ENCODE measurements at regions of chr12 and their contacts with region 1.

Region 1: GRCh38 chr12:9707864-9708808 is 24.8 kb downstream of the CLECL1 start:
- DNase-seq: peak; percentile 77
- H3K4me3 Mint-ChIP-seq: peak overlapping the region; percentile 17
- H3K27ac Mint-ChIP-seq: peak overlapping the region; percentile 87
- H3K4me1 Mint-ChIP-seq: peaks cover 48% of the 10 kb centered on the region
- H3K27me3 Mint-ChIP-seq: no peaks in the 10 kb centered on the region

Region 2: GRCh38 chr12:9634177-9634803 is 73.8 kb before region 1 on chr12:
- CTCF ChIA-PET with region 1: interaction called, 14 read pairs
- POLR2A ChIA-PET with region 1: no interaction called
- DNase-seq: peak; percentile 88
- H3K4me3 Mint-ChIP-seq: no peak overlapping the region
- H3K27ac Mint-ChIP-seq: peak overlapping the region; percentile 80
- H3K4me1 Mint-ChIP-seq: peaks cover 58% of the 10 kb centered on the region
- H3K27me3 Mint-ChIP-seq: no peaks in the 10 kb centered on the region

Region 3: DNA sequence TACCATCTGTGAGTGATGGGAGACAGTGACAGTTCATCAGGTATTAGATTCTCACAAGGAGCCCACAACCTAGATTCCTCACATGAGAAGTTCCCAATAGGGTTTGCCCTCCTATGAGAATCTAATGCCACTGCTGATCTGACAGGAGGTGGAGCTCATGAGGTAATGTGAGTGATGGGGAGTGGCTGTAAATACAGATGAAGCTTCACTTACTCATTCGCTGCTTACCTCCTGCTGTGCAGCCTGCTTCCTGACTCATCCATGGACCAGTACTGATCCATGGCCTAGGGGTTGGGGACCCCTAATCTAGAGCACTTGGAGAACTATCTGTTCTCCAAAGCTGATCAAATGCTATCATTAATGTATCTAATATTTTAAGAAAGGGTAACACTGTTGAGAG is 20.9 kb before region 1 on chr12:
- CTCF ChIA-PET with region 1: interaction called, 15 read pairs
- POLR2A ChIA-PET with region 1: no interaction called
- DNase-seq: no peak
- H3K4me3 Mint-ChIP-seq: no peak overlapping the region
- H3K27ac Mint-ChIP-seq: peak overlapping the region; percentile 71
- H3K4me1 Mint-ChIP-seq: peaks cover 76% of the 10 kb centered on the region
- H3K27me3 Mint-ChIP-seq: no peaks in the 10 kb centered on the region

Region 4: GRCh38 chr12:9719790-9720189 is 11.7 kb after region 1 on chr12:
- CTCF ChIA-PET with region 1: interaction called, 13 read pairs
- POLR2A ChIA-PET with region 1: no interaction called
- DNase-seq: no peak
- H3K4me3 Mint-ChIP-seq: no peak overlapping the region
- H3K27ac Mint-ChIP-seq: no peak overlapping the region
- H3K4me1 Mint-ChIP-seq: peaks cover 27% of the 10 kb centered on the region
- H3K27me3 Mint-ChIP-seq: no peaks in the 10 kb centered on the region

Region 5: DNA sequence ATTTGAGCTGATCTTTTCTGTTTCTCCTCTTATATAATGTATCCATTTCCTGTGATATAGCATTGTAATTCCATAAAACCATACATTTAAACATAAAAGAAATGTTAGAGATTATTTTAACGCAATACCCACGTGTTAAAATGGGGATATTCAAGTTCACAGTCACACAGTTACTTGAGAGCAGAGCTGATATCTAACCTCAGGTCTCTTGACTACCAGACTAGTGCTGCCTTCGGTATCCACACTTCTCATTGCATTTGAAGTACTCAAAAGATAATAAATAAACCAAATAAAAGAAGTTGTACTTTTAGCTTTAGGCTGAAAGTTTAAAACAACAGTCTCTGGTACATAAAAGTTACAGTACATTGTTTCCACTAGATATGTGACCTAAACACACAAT is 21.9 kb after region 1 on chr12:
- CTCF ChIA-PET with region 1: interaction called, 11 read pairs
- POLR2A ChIA-PET with region 1: no interaction called
- DNase-seq: no peak
- H3K4me3 Mint-ChIP-seq: no peak overlapping the region
- H3K27ac Mint-ChIP-seq: no peak overlapping the region
- H3K4me1 Mint-ChIP-seq: peaks cover 24% of the 10 kb centered on the region
- H3K27me3 Mint-ChIP-seq: no peaks in the 10 kb centered on the region

Region 6: GRCh38 chr12:9797722-9798619 is 89.8 kb after region 1 on chr12:
- CTCF ChIA-PET with region 1: no interaction called
- POLR2A ChIA-PET with region 1: no interaction called
- DNase-seq: peak; percentile 85
- H3K4me3 Mint-ChIP-seq: peak overlapping the region; percentile 65
- H3K27ac Mint-ChIP-seq: peak overlapping the region; percentile 88
- H3K4me1 Mint-ChIP-seq: peaks cover 46% of the 10 kb centered on the region
- H3K27me3 Mint-ChIP-seq: peaks cover 10% of the 10 kb centered on the region

Measured in activated CD4-positive, alpha-beta T cell treated with anti-CD3 and anti-CD28 coated beads, Interleukin-2, amount 10 ng/mL, durations not matched to agents 7 days and 5 days (primary cell).